Activated naive CD4-positive, alpha-beta T cell treated with anti-CD3 and anti-CD28 coated beads for 36 hours (primary cell): ENCODE measurements at regions of chr6 and their contacts with region 1.

Region 1: DNA sequence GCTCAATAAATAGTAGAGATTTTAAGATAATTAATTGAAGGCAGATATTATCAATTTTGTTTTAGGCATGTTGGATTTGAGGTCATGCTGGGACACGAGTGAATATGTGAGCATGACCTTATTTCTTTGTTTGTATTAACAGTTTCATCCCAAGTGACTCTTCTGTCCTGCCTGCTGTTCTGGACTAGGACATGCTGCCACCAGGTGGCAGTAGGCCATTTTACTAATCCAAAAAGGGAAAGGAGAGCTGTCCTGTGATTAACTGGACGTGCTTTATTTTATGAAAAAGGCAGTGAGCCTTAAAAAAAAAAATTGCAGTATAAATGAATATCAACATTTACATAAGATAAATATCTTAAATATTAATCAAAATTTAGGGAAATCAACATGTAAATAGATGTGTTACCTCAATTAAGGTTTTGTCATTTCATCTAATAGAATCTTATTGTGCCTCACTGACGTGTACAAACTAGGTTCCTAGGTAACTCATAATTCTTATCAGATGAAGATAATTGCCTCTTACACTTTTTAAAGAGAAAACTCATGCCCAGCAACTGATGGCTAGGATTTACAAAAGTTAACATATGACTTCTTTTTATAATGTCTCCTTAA is 49.8 kb downstream of the FRK start:
- DNase-seq: peak; percentile 74
- H3K4me3 Mint-ChIP-seq: no peak overlapping the region
- H3K27ac Mint-ChIP-seq: peak overlapping the region; percentile 35
- H3K4me1 Mint-ChIP-seq: peaks cover 18% of the 10 kb centered on the region
- H3K27me3 Mint-ChIP-seq: peaks cover 16% of the 10 kb centered on the region

Region 2: GRCh38 chr6:115891111-115891669 is 119.7 kb before region 1 on chr6:
- CTCF ChIA-PET with region 1: no interaction called
- intact Hi-C with region 1: loop called (anchors 1 kb)
- DNase-seq: peak; percentile 17
- H3K4me3 Mint-ChIP-seq: no peak overlapping the region
- H3K27ac Mint-ChIP-seq: peak overlapping the region; percentile 9
- H3K4me1 Mint-ChIP-seq: peaks cover 5% of the 10 kb centered on the region
- H3K27me3 Mint-ChIP-seq: peaks cover 4% of the 10 kb centered on the region

Region 3: GRCh38 chr6:116100419-116101301 is 89.8 kb after region 1 on chr6 and contains the start of gene NT5DC1:
- CTCF ChIA-PET with region 1: interaction called, 14 read pairs
- intact Hi-C with region 1: loop called (anchors 1 kb)
- DNase-seq: peak; percentile 87
- H3K4me3 Mint-ChIP-seq: peak within 1 kb of the TSS; percentile 90
- H3K27ac Mint-ChIP-seq: peak within 1 kb of the TSS; percentile 81
- H3K4me1 Mint-ChIP-seq: peaks cover 43% of the 10 kb centered on the region
- H3K27me3 Mint-ChIP-seq: no peaks in the 10 kb centered on the region
- total RNA-seq, gene NT5DC1: 59.7 to 62.6 TPM

Region 4: DNA sequence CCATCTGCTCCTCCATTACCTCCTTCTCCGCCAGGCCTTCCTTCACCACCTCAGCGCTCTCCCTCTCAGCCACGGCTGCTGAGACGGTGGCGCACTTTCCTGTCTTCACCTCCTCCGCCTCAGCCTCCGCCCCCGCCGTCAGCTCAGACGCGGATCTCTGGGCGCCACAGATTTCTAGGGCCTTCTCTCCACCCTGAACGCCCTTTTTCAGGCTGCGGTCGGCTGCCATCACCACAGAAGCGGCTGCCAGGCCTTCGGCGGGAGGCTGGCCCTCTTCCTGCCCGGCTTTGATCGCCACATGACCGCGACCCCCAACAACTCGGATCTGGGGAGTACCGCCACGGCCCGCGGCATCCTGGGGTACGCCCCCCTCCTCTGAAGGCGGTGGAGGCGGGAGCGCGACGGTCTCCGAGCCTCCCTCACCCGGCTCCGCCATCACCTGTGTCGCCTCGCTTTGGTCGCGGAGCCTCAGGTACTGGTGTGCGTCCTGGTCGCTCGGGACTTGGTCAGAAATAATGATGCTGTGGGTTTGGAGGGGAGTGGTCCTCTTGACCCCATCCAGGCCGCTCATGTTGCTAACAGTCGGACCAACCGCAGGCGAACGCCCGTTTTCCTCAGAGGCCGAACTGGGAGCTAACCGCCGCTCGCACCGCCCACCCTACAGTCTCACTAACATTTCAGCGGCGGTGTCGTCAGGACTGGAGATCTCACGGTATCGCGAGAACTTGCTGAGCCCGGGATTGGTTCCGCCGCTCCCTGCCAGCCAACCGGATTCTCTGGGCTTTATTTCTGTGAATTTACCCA is 268.6 kb after region 1 on chr6 and contains the start of gene TSPYL1:
- CTCF ChIA-PET with region 1: no interaction called
- intact Hi-C with region 1: loop called (anchors 2 kb)
- DNase-seq: peak; percentile 97
- H3K4me3 Mint-ChIP-seq: peak within 1 kb of the TSS; percentile 93
- H3K27ac Mint-ChIP-seq: peak within 1 kb of the TSS; percentile 96
- H3K4me1 Mint-ChIP-seq: peaks cover 36% of the 10 kb centered on the region
- H3K27me3 Mint-ChIP-seq: no peaks in the 10 kb centered on the region
- total RNA-seq, gene TSPYL1: 33.4 to 34.7 TPM

Region 5: DNA sequence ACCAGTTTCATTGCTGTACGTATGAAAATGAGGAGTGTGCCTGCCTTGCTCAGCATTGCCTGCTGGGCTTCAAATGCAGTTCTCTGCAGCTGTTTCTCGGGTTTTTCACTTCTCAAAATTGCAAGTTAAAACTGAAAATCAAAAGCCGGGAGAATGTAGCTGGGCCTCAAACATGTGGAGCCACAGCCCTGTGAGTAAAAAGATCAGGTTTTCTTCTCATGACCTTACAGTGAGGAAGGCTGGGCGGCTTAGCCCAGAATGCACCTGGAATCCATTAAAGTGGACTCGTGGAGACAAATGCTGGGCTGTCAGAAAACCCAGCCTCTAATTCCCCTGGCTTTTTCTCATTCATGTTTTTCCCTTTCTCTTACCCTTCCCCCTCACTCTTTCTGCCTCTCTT is 394.2 kb after region 1 on chr6:
- CTCF ChIA-PET with region 1: no interaction called
- intact Hi-C with region 1: no loop called
- DNase-seq: no peak
- H3K4me3 Mint-ChIP-seq: no peak overlapping the region
- H3K27ac Mint-ChIP-seq: no peak overlapping the region
- H3K4me1 Mint-ChIP-seq: no peaks in the 10 kb centered on the region
- H3K27me3 Mint-ChIP-seq: peaks cover 9% of the 10 kb centered on the region

Region 6: DNA sequence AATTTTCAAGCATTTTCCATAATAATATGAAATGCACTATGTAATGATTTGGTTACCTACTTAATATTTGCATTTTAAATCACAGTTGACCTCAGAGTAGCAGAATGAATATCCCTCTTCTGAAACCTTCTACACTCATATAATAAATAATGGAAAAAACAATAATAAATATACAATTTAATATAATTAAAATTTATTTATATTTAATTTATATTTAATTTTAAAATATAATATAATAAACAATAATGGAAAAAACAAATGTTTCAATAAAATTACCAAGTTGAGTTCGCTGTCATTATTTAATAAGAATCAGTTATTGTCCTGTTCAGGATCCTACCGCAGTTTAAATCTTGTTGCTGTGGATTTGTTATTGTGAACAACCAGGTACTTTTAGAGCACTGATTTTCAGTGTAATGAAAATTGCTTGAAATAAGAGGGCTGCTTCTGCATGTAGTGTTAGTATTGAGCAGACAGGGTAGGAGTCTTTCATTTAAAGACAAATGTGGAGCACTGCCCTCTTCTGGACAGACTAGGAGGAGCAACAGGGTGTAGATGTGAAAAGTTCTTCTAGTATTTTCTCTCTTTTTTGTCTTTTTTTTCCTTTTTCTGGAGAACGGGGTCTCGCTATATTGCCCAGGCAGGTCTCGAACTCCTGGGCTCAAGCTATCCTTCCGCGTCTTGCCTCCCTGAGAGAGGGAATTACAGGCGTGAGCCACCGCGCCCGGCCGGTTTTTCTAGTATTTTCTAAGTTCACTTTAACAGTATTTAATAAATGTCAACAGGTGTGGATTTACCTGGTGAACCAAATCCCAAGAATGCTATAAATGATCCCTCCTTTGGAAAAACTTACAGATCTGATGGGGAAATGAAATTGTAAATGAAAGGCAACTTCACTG is 521.0 kb after region 1 on chr6:
- CTCF ChIA-PET with region 1: no interaction called
- intact Hi-C with region 1: loop called (anchors 1 kb)
- DNase-seq: peak; percentile 79
- H3K4me3 Mint-ChIP-seq: no peak overlapping the region
- H3K27ac Mint-ChIP-seq: no peak overlapping the region
- H3K4me1 Mint-ChIP-seq: no peaks in the 10 kb centered on the region
- H3K27me3 Mint-ChIP-seq: peaks cover 11% of the 10 kb centered on the region

Region 7: DNA sequence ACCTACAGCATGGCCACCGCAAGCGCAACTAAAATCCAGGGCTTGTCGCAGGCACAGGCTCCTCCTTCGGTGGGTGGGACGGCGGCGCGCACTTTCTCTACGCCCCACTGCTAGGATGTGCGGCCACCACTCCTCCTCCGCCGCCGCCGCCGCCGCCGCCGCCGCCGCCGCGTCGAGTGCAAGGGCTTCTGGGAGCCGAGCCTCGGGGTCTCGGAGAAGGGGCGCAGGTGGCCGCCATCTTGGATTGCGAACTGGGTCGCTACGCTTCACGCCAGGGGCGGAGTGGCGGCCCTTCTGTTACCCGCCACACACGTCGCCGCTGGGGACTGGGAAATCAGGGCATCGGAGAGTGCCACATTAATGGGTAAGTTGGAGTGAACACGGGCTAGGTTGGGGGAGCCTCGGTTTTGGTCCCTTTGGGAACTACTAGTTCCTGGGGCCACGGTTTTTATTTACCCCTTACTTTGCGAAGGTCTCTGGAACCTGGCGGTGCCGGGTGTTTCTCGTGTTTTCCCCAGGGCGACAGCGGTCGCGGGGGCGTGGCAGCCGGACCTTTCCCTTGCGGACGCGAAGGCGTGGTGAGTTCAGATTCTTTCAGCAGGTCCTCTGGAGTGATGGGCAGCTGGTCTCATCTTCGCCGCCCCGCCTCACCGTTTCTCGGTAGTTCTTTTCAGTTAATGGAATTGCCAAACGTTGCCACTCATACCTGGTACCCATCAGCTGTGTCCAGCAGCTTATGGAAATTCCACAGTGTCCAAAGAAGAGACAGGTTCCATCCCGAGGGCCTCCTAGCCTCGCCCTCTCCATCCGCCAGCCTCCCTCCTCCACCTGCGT is 670.3 kb after region 1 on chr6 and contains the start of gene KPNA5:
- CTCF ChIA-PET with region 1: no interaction called
- intact Hi-C with region 1: loop called (anchors 5 kb)
- DNase-seq: peak; percentile 94
- H3K4me3 Mint-ChIP-seq: peak within 1 kb of the TSS; percentile 96
- H3K27ac Mint-ChIP-seq: peak within 1 kb of the TSS; percentile 97
- H3K4me1 Mint-ChIP-seq: peaks cover 43% of the 10 kb centered on the region
- H3K27me3 Mint-ChIP-seq: no peaks in the 10 kb centered on the region
- total RNA-seq, gene KPNA5: 8.4 to 8.9 TPM